Kidney (tissue), 22 donors: ENCODE measurements at regions of chr16 and their contacts with region 1.

Region 1: DNA sequence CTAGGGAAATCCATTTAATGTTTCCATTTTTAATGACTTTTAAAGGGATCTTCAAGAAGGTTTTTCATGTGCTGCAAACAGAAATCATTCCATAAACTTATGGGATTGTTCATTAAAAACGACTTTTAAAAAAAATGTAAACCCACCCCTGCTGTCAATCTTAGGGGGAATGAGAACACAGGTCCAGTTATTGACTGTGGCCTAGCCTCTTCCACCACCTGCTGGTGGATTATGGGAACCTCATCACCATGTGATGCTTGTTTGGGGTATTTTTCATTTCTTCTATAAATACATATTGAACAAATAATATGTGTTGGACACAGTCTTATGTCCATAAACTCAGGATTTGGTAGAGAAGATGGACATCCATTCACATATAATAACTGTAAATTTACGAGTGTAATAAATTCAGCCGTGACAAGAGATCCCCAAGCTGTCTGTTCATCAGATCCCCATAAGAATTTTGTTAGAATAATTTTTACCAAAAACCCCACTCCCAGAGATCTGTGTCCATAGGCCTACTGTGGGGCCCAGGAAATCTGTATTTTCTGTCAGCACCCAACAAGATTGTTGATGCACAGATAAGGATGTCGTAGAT is 42.0 kb upstream of the TMC5 start:
- DNase-seq: peak in 4 of 5 donors; percentile 35 to 71 (median 51)
- H3K4me3 ChIP-seq: no peak overlapping the region
- H3K27ac ChIP-seq: no peak overlapping the region
- H3K4me1 ChIP-seq: no peaks in the 10 kb centered on the region
- H3K27me3 ChIP-seq: no peaks in the 10 kb centered on the region
- CTCF ChIP-seq: peak; percentile 74

Region 2: GRCh38 chr16:19094541-19095365 is 280.9 kb before region 1 on chr16:
- intact Hi-C with region 1: loop called (anchors 5 kb)
- DNase-seq: no peak
- H3K4me3 ChIP-seq: no peak overlapping the region
- H3K27ac ChIP-seq: no peak overlapping the region
- H3K4me1 ChIP-seq: no peaks in the 10 kb centered on the region
- H3K27me3 ChIP-seq: no peaks in the 10 kb centered on the region
- CTCF ChIP-seq: no peak

Region 3: DNA sequence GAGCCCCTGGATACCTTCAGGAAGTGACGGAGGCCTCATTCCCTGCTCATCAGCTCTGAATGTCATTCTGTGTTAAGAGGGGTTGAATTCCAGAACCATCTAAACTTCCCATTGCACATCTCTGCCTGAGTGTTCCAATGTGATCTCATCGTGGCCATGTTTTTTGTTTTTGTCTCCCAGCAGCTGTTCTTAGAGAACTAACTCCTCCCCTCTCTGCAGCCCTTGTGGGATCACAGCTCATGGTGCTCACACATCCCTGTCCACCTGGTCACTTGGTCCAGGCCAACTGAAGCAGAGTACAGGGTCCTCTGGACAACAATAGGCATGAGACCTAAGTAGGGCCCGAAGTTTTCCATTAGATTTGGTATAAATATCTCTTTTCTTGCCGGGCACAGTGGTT is 213.6 kb before region 1 on chr16:
- intact Hi-C with region 1: no loop called
- DNase-seq: no peak
- H3K4me3 ChIP-seq: no peak overlapping the region
- H3K27ac ChIP-seq: no peak overlapping the region
- H3K4me1 ChIP-seq: no peaks in the 10 kb centered on the region
- H3K27me3 ChIP-seq: no peaks in the 10 kb centered on the region
- CTCF ChIP-seq: no peak

Region 4: GRCh38 chr16:19179546-19180490 is 195.8 kb before region 1 on chr16:
- intact Hi-C with region 1: loop called (anchors 10 kb)
- DNase-seq: peak in 3 of 5 donors; percentile 33 to 77 (median 34)
- H3K4me3 ChIP-seq: no peak overlapping the region
- H3K27ac ChIP-seq: no peak overlapping the region
- H3K4me1 ChIP-seq: peaks cover 0 to 1% (median 0%) of the 10 kb centered on the region in 3 donors
- H3K27me3 ChIP-seq: no peaks in the 10 kb centered on the region
- CTCF ChIP-seq: peak; percentile 39

Region 5: DNA sequence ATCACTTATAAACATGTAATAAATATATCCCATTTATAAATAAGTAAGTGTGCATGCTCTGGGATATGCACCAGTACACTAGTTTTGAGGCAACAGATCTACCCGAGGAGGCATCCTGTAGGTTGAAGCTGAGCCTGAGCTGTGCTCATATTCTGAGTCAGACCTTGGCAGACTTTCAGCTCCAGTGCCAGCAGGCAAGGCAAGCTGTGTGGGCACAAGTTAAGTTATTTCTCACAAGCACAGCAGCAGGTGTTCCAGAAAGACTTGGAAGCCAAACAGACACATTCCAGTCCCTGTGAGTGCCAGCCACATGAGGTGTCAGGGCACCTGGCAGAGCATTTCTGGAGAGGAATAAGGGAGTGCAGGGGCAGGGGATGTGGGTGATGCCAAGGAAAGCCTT is 91.5 kb before region 1 on chr16:
- intact Hi-C with region 1: no loop called
- DNase-seq: no peak
- H3K4me3 ChIP-seq: no peak overlapping the region
- H3K27ac ChIP-seq: no peak overlapping the region
- H3K4me1 ChIP-seq: no peaks in the 10 kb centered on the region
- H3K27me3 ChIP-seq: no peaks in the 10 kb centered on the region
- CTCF ChIP-seq: no peak